ENCODE measurements at regions of chr18 and their contacts with region 1.

Region 1: GRCh38 chr18:26574958-26575864 is 26.9 kb upstream of the KCTD1 start:
- DNase-seq: peak; percentile 44
- H3K4me3 ChIP-seq: peak overlapping the region; percentile 16
- H3K27ac ChIP-seq: no peak overlapping the region
- H3K4me1 ChIP-seq: peaks cover 4% of the 10 kb centered on the region
- H3K27me3 ChIP-seq: no peaks in the 10 kb centered on the region
- CTCF ChIP-seq: no peak

Region 2: GRCh38 chr18:26511339-26512071 is 63.7 kb before region 1 on chr18:
- intact Hi-C with region 1: loop called (anchors 10 kb)
- DNase-seq: no peak
- H3K4me3 ChIP-seq: no peak overlapping the region
- H3K27ac ChIP-seq: no peak overlapping the region
- H3K4me1 ChIP-seq: no peaks in the 10 kb centered on the region
- H3K27me3 ChIP-seq: no peaks in the 10 kb centered on the region
- CTCF ChIP-seq: no peak